Activated naive CD4-positive, alpha-beta T cell treated with anti-CD3 and anti-CD28 coated beads, Interleukin-2, amount 10 ng/mL, durations not matched to agents 7 days and 5 days (primary cell): ENCODE measurements at regions of chr18 and their contacts with region 1.

Region 1: DNA sequence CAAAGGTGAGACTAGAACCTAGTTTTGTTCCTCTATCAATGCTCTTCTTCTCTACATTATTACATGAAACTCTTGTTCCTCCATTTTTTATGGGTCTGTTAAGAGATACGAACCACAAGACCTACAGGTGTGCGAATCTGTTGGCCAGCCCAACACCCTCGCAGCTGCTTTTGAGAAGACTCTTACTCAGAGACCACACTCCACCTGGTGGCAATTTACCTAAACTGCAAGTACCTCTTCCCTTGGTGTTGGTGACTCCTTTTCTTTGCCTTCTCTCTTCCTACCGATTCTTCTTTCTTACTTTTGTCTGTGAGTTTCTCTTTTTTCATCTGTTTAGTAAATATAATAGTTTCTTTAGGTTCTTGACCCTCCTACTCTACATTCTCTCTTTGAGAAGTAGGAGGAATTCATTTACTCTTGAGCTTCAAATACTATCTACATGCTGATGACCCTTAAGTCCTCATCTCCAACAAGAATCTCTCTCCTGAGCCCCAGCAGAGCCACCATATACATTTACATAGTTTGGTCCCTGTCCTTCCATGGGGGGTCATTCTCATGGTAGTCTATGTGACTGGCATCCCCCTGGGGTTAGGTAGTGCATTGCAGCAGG is 81.8 kb upstream of the GAREM1 start:
- DNase-seq: peak; percentile 69
- H3K4me3 Mint-ChIP-seq: no peak overlapping the region
- H3K27ac Mint-ChIP-seq: no peak overlapping the region
- H3K4me1 Mint-ChIP-seq: no peaks in the 10 kb centered on the region
- H3K27me3 Mint-ChIP-seq: no peaks in the 10 kb centered on the region

Region 2: DNA sequence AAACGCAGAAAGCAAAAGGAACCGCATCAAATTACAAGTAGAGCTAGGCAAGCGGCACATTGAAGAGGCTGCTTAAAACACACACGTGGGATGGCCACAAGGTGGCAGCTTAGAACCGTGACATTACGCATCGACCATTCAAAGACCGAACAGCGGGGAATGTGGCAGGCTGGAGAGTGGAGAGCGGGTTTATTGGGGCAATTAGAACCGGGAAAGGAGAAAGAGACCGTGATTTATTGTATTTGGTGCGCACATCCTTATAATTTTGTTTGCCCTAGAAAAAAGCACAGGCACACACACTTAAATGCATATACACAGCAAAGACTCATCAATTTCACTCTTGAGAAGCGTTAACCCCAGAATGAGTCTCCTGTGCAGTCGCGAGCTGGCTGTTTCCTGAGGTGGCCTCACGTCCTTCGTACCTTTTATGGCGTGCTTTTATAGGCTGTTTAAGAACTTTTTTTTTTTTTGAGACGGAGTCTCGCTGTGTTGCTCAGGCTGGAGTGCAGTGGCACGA is 394.4 kb before region 1 on chr18:
- CTCF ChIA-PET with region 1: interaction called, 35 read pairs
- DNase-seq: peak; percentile 83
- H3K4me3 Mint-ChIP-seq: peak overlapping the region; percentile 36
- H3K27ac Mint-ChIP-seq: no peak overlapping the region
- H3K4me1 Mint-ChIP-seq: peaks cover 8% of the 10 kb centered on the region
- H3K27me3 Mint-ChIP-seq: peaks cover 7% of the 10 kb centered on the region

Region 3: DNA sequence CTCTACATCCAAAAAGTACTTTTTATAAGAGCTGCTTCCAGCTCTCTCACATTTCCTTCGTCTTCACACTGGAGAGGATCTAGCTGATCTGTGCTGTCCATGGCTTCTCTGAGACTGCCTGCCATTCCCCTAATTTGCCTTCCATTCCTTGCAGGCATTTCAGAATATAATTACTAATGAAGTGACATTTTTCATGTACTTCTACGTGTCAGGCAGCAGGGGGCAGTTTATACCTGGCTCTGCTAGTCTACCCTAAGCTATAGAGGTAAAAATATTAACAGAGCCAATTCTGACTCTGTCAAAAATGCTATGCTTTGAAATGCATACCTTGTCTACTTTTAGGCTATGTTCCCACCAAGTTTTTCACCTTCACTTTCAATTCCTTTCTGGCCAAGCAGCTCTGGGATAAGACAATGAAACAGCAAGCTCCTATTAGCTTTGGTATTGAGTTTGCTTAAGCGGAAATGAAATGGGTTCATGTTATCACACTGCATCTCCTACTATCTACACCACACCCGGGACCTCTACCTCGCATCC is 280.8 kb before region 1 on chr18:
- CTCF ChIA-PET with region 1: interaction called, 15 read pairs
- DNase-seq: peak; percentile 28
- H3K4me3 Mint-ChIP-seq: no peak overlapping the region
- H3K27ac Mint-ChIP-seq: no peak overlapping the region
- H3K4me1 Mint-ChIP-seq: no peaks in the 10 kb centered on the region
- H3K27me3 Mint-ChIP-seq: peaks cover 3% of the 10 kb centered on the region

Region 4: DNA sequence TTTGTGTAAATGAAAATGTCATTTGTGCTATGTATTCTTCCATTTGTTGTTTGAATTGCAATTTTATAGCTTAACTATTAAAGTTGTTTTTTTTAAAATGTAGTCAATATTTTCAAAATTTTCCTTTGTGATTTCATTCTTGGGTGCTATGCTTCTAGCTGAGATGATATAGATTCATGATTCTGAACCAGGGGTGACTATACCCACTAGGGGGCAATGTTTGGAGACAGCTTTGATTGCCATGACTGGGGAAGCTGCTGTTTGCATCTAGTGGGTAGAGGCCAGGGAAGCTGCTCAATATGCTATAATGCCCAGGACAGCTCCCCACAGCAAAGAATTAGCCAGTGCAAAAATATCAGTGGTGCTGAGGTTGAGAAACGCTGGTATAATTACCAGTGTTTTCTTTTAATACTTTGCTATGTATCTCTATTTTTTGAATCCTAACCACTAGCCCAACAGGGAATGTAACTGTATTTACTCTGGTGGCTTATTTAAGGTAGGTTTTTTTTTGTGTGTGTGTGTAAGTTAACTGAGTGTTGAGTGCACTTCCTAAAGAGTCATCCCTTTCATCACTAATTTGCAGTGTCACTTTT is 262.9 kb before region 1 on chr18:
- CTCF ChIA-PET with region 1: interaction called, 13 read pairs
- DNase-seq: peak; percentile 53
- H3K4me3 Mint-ChIP-seq: no peak overlapping the region
- H3K27ac Mint-ChIP-seq: no peak overlapping the region
- H3K4me1 Mint-ChIP-seq: no peaks in the 10 kb centered on the region
- H3K27me3 Mint-ChIP-seq: peaks cover 14% of the 10 kb centered on the region